ENCODE measurements at regions of chr19 and their contacts with region 1.

Region 1: GRCh38 chr19:47112997-47113849 is at the start of gene ZC3H4:
- DNase-seq: peak; percentile 100
- H3K4me3 Mint-ChIP-seq: peak within 1 kb of the TSS; percentile 99
- H3K27ac Mint-ChIP-seq: peak within 1 kb of the TSS; percentile 100
- H3K4me1 Mint-ChIP-seq: peaks cover 26% of the 10 kb centered on the region
- H3K27me3 Mint-ChIP-seq: no peaks in the 10 kb centered on the region
- total RNA-seq, gene ZC3H4: 46.0 to 48.8 TPM

Region 2: DNA sequence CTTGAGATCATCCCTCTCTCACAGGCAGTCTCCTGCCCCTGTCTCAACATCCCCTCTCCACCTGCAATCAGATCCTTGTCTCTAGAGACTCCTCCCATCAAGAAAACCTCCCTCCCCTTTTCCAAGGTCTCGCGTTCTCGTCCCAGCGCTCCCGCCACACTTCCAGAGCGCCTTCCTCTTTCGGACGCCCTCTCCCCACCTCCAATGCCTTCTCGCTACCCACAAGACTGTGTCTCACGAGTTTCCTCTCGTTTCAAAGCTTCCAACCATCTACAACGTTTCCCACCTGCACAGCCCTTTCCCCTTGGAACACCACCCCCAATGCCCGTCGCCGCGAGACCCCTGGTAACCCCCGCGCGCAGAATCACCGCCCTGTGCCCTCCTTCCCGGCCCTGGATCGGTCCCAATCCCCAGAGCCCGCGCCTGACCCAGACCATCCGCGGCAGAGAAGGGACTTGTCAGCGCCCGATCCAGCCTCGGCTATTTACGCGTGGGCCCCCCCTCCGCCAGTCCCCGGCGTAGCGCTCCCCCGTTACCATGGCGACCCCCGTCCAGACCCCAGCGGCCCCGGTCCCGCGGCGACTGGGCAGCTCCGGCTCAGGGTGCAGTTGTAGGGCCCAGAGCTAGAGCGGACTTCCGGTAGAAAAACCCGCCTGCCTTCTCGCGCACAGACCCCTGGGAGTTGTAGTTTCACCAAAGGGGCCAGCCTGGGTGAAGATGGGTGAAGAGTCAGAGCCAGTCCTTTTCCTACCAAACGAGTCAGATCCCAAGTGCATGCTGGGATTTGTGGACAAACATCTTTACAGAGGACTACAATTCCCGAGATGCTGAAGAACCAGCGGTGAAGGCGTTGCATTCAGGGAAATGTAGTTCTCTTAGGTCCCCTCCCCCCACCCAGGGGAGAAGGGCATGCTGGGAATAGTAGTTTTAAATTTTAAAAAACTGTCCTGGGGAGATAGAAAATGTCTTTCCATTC is 262.7 kb before region 1 on chr19 and contains the start of gene AP2S1:
- CTCF ChIA-PET with region 1: no interaction called
- intact Hi-C with region 1: loop called (anchors 1 kb)
- DNase-seq: peak; percentile 96
- H3K4me3 Mint-ChIP-seq: peak within 1 kb of the TSS; percentile 90
- H3K27ac Mint-ChIP-seq: peak within 1 kb of the TSS; percentile 74
- H3K4me1 Mint-ChIP-seq: peaks cover 15% of the 10 kb centered on the region
- H3K27me3 Mint-ChIP-seq: no peaks in the 10 kb centered on the region
- total RNA-seq, gene AP2S1: 112 to 118 TPM

Region 3: GRCh38 chr19:46924874-46925547 is 188.2 kb before region 1 on chr19:
- CTCF ChIA-PET with region 1: no interaction called
- intact Hi-C with region 1: no loop called
- DNase-seq: peak; percentile 21
- H3K4me3 Mint-ChIP-seq: no peak overlapping the region
- H3K27ac Mint-ChIP-seq: no peak overlapping the region
- H3K4me1 Mint-ChIP-seq: peaks cover 29% of the 10 kb centered on the region
- H3K27me3 Mint-ChIP-seq: no peaks in the 10 kb centered on the region

Region 4: DNA sequence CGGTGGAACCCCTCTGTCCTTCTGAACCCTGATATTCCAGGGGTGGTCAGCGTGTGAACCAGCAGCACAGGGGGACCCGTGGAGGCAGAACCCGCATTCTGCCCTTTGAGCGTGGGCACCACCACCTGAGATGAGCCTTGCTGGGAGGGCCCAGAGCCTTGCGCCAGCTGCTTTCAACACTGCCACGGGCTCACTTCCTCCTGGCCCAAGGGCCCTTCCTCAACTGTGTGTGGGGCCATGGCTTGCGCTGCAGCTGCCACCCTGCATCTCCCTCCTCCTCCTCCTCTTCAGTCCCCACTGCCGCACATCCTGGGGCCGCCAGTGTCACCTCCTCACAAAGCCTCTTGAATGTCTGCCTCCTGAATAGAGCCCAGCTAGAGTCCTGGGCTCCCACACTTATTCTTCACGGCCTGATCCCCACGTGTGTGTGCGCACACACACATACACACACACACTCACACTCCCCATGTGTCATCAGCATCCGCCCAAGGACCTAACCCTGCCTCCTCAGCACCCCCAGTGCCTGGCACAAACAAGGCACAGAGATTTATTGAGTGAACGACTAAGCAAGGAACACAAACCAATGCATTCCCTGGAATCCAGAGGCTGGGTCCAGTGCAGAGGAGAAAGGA is 37.9 kb before region 1 on chr19:
- CTCF ChIA-PET with region 1: interaction called, 14 read pairs
- intact Hi-C with region 1: loop called (anchors 5 kb)
- DNase-seq: no peak
- H3K4me3 Mint-ChIP-seq: no peak overlapping the region
- H3K27ac Mint-ChIP-seq: no peak overlapping the region
- H3K4me1 Mint-ChIP-seq: peaks cover 3% of the 10 kb centered on the region
- H3K27me3 Mint-ChIP-seq: no peaks in the 10 kb centered on the region

Region 5: GRCh38 chr19:47130591-47131227 is 17.5 kb after region 1 on chr19 and contains the start of gene SAE1:
- CTCF ChIA-PET with region 1: interaction called, 24 read pairs
- intact Hi-C with region 1: loop called (anchors 2 kb)
- DNase-seq: peak; percentile 95
- H3K4me3 Mint-ChIP-seq: peak within 1 kb of the TSS; percentile 99
- H3K27ac Mint-ChIP-seq: peak within 1 kb of the TSS; percentile 99
- H3K4me1 Mint-ChIP-seq: peaks cover 41% of the 10 kb centered on the region
- H3K27me3 Mint-ChIP-seq: no peaks in the 10 kb centered on the region
- total RNA-seq, gene SAE1: 160 to 161 TPM

Region 6: DNA sequence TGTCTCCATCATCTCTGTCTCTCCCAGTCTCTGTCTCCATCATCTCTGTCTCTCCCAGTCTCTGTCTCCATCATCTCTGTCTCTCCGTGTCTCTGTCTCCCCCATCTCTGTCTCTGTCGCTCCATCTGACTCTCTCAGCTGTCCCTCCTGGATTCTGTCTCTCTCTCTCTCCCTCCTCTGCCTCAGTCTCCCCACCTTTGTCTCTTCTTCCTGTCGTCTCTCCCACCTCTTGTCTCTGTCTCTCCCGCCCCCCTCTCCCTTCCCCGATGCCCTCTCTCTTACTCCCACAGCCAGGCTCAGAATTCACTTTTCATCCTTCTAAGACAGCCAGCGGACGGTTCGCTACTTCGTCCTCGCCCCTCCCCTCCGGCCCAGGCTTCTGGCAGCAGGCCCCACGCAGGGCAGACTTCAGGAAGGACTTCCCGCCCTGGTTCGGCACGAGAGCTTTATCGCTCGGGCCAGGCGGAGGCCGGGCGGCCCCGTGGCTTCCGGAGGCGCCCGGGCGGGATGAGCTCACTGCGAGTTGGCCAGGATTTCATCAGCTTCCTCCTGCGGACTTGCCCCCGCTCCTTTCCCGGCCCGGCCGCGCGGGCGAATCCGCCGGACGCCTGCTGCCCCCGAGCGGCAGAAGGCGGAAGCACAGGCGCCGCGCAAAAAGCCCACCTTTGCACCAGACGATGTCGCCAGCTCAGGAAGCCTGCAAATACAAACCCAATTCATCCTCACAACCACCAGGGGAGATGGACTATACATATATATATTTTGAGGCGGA is 130.7 kb after region 1 on chr19:
- CTCF ChIA-PET with region 1: interaction called, 13 read pairs
- intact Hi-C with region 1: loop called (anchors 1 kb)
- DNase-seq: peak; percentile 95
- H3K4me3 Mint-ChIP-seq: peak overlapping the region; percentile 97
- H3K27ac Mint-ChIP-seq: peak overlapping the region; percentile 97
- H3K4me1 Mint-ChIP-seq: peaks cover 34% of the 10 kb centered on the region
- H3K27me3 Mint-ChIP-seq: no peaks in the 10 kb centered on the region

Region 7: GRCh38 chr19:47324502-47324901 is 211.3 kb after region 1 on chr19:
- CTCF ChIA-PET with region 1: no interaction called
- intact Hi-C with region 1: no loop called
- DNase-seq: no peak
- H3K4me3 Mint-ChIP-seq: no peak overlapping the region
- H3K27ac Mint-ChIP-seq: no peak overlapping the region
- H3K4me1 Mint-ChIP-seq: no peaks in the 10 kb centered on the region
- H3K27me3 Mint-ChIP-seq: peaks cover 18% of the 10 kb centered on the region